ENCODE measurements at regions of chr3 and their contacts with region 1.

Region 1: DNA sequence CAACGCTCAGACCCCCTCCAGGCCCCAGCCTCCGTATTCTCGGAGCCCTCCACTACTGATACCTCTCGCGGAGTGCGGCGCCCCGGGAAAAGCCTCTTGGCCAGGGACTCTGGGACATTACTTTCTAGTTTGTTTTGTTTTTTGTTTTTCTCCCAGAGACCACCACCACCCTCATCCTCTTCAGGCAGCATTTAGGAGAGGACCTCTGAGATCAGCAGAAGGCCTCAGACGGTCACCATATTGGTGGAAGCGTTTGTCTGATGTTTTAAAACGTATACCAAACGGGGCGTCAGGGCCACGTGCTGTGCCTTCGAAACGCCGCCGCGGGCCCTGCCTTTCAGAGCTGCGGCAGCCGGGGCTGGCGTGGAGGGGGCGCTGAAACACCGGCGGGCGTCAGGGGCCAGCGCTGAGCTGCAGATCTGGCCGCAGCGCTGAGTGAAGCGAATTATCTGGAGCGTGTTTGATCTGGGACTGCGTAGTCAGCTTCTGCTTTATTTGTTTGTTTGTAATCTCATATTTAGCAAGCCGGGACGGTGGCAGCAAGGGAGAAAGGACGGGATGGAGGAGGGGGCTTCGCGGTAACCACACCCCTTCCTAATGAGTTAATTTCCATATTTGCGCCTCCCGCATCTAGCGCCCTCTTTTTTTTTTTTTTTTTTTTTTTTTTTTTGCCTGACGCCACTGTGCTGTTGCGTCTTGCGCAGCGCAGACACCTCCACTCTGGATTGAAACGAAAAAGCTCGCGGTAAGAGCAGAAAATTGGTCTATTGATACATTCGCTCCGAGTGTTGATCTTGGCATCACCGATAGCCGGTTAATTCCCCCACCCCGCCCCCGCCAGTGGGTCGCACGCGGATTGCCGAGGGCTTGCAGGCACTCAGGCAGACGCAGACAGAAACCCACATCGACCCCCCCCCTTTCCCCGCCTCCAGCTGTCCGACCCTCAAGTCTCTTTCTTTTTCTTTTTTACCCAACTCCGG is 14.9 kb downstream of the SOX2 start:
- DNase-seq: no peak
- ATAC-seq: no peak
- H3K4me3 Mint-ChIP-seq: peak overlapping the region; percentile 84
- H3K27ac Mint-ChIP-seq: no peak overlapping the region
- H3K4me1 Mint-ChIP-seq: peaks cover 17% of the 10 kb centered on the region
- H3K27me3 Mint-ChIP-seq: peaks cover 81% of the 10 kb centered on the region
- CTCF ChIP-seq: no peak

Region 2: DNA sequence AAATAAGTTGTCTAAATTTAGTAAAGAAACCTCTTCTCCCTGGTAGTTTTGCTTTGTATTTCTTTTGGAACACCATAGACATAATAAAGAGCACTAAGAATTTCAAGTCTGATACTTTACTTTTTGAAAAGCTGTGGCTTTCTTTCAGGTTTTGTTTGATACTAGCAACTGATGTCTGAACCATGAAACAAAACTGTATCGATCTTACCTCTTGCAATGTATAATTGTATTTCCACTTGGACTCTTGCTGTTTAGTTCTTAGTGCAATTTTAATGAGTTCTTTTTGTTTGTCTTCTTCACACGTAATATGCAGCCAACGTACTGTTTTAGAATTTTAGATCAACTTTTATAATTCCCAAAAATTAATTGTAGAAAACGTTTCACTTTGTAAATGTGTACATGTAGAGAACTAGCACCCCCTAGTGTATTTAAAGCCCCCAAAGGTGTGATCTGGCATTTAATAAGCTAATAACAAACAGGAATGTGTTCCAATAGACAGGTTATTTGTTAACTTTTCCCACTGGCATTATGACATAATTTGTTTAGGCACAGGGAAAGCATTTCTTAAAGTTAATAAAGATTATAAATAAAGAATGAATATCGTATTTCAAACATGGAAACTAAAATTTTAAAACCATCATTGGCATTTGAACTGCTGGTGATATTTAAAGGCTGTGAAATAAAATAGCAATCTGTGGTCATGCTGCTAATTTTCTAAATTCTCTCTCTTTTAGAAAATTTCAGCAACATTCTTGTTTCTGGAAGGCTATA is 448.0 kb before region 1 on chr3:
- CTCF ChIA-PET with region 1: no interaction called
- POLR2A ChIA-PET with region 1: interaction called, 11 read pairs
- intact Hi-C with region 1: no loop called
- DNase-seq: no peak
- ATAC-seq: no peak
- H3K4me3 Mint-ChIP-seq: no peak overlapping the region
- H3K27ac Mint-ChIP-seq: no peak overlapping the region
- H3K4me1 Mint-ChIP-seq: no peaks in the 10 kb centered on the region
- H3K27me3 Mint-ChIP-seq: peaks cover 2% of the 10 kb centered on the region
- CTCF ChIP-seq: no peak

Region 3: DNA sequence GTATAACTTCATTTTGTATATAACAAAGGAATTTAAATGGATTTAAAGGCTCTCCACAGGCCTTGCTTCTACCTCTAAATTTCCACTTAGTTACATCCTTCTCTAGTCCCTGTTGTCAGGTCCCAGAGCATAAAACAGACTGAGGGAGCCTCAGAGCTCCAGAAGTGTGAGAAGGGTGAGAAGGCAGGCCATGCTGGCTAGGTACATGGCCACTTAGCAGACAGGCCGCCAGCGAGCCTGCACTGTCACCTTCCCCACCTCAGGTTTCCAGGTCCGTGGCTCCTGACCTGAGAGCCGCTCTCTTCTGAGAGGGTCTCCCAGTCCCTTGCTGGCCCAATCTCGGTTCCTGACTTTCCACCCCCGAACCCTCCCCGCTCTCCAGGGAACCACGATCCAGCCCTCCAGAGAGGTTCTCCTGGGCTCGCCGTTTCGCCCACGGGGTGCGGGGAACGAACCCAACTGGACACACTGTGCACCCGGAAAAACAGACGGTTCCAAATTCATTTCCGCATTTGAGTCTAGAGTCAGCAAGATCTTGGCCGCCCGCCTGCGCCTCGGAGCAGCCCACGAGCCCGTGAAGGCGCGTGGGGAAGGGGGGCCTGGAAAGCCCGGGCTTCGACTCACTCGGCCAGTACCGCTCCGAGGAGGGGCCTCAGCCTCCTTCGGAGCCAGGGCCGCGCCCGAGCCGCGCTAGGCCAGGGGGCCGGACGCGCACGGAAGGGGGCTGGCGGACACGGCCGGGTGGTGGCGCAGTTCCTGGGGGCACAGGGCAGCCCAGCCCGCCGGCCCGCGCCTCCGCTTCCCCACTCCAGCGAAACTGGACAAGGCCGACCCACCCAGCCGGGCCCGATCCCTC is 31.6 kb before region 1 on chr3:
- CTCF ChIA-PET with region 1: no interaction called
- POLR2A ChIA-PET with region 1: no interaction called
- intact Hi-C with region 1: loop called (anchors 5 kb)
- DNase-seq: no peak
- ATAC-seq: no peak
- H3K4me3 Mint-ChIP-seq: no peak overlapping the region
- H3K27ac Mint-ChIP-seq: no peak overlapping the region
- H3K4me1 Mint-ChIP-seq: peaks cover 11% of the 10 kb centered on the region
- H3K27me3 Mint-ChIP-seq: peaks cover 59% of the 10 kb centered on the region
- CTCF ChIP-seq: no peak

Region 4: GRCh38 chr3:181709537-181710279 is 16.9 kb before region 1 on chr3:
- CTCF ChIA-PET with region 1: no interaction called
- POLR2A ChIA-PET with region 1: interaction called, 3 read pairs
- intact Hi-C with region 1: loop called (anchors 2 kb)
- DNase-seq: no peak
- ATAC-seq: no peak
- H3K4me3 Mint-ChIP-seq: peak overlapping the region; percentile 60
- H3K27ac Mint-ChIP-seq: peak overlapping the region; percentile 19
- H3K4me1 Mint-ChIP-seq: peaks cover 12% of the 10 kb centered on the region
- H3K27me3 Mint-ChIP-seq: peaks cover 48% of the 10 kb centered on the region
- CTCF ChIP-seq: peak; percentile 67